Activated naive CD4-positive, alpha-beta T cell treated with anti-CD3 and anti-CD28 coated beads for 36 hours (primary cell): ENCODE measurements at regions of chr1 and their contacts with region 1.

Region 1: DNA sequence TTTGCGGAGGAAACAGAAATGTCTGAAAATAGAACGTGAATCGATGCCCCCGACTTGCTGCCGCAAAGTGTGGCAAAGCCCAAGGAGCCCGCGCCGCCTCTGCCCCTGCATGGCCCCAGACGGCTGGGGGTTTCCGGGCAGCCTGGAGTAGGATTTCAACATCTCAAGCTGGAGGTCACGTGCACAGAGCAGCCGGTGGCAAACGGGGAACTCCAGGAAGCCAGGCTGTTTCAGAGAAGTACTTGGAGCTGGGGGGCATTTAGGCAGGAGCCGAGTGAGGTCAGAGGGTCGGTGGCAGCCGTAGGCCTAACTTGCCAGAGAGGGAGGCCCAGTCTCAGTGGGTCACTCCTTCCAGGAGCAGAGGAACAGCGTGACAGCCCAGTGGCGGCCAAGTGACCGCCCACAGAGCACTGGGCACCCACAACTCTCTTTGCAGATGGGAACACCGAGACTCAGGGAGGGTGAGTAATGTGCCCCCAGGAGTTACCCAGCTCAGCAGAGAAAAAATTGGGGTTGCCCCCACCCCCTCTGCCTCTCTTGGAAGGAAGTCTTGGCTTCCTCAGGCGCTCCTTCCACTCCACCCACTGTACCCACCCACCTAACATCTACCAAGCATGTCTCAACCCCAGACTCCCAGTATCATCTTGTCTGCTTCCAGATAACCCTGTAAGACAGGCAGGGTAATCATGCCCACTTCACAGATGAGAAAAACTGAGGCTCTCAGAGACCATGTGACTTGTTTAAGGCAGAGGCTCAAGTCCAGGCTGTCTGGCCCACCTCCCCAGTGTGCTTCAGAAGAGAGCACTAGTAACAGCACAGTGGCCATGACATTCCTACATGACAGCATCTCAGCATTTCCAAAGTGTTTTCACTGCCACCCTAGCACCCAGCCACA is 179.4 kb downstream of the HIVEP3 start:
- DNase-seq: peak; percentile 96
- H3K4me3 Mint-ChIP-seq: peak overlapping the region; percentile 73
- H3K27ac Mint-ChIP-seq: peak overlapping the region; percentile 98
- H3K4me1 Mint-ChIP-seq: peaks cover 93% of the 10 kb centered on the region
- H3K27me3 Mint-ChIP-seq: no peaks in the 10 kb centered on the region

Region 2: DNA sequence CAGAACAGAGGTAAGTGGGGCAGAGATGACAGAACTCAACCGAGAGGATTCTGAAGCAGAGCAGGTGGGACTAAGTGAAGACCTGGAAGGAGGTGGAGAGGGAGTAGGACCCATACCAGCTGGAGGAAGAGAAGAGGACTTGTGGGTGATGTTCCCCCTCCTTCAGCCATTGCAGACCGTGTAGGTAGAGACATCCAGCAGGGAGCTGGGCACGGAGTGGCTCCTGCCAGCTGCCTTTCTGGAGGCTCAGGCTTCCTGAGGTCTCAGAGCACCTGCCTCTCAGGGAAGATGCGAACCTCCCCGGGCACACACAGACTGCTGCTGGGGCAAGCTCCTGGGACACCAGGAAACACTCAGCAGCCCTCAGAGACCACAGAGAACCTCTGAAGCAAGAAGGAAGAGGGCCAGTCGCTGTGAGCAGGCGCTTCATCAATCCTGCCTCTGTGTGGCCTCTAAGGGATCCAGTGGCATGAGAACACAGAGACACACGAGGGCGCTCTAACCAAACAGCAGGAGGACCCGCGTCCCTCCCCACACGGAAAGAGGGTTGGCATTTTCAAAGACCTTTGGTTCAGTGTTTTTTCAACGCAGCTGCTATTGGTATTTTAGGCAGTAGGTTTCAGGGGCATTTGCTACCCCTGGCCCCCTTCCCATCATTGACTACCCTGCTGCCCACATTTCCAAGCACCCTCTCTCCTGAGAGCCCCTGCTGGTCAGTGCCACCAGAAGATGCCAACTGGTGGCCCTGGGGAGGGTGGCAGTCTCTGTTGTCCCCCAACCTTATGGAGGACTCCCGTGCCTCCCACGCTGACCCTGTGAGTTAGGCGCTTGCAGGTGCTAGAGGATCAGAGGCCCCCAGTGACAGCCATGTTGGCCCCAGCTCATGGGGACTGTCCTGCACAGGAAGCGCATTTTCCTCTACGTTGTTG is 165.3 kb before region 1 on chr1:
- CTCF ChIA-PET with region 1: no interaction called
- intact Hi-C with region 1: no loop called
- DNase-seq: peak; percentile 92
- H3K4me3 Mint-ChIP-seq: no peak overlapping the region
- H3K27ac Mint-ChIP-seq: peak overlapping the region; percentile 20
- H3K4me1 Mint-ChIP-seq: peaks cover 42% of the 10 kb centered on the region
- H3K27me3 Mint-ChIP-seq: no peaks in the 10 kb centered on the region

Region 3: DNA sequence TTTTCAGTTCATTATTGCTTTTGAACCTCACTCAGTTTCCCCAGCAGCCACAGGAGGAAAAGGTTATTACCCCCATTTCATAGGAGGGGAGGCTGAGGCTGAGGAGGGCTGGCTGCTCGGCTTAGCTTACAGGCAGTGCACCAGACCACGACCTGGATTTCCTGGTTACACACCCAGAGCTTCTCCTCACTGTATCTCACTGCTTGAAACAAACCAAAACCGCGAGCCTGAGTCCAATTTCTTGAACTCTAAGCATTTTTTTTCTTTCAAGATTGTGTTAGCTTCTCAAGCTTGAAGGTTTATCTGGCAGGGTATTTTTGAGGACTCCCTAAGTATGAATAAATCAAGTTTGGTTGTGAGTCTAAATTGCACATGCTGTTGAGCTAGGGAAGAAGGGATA is 65.9 kb before region 1 on chr1:
- CTCF ChIA-PET with region 1: no interaction called
- intact Hi-C with region 1: loop called (anchors 2 kb)
- DNase-seq: peak; percentile 78
- H3K4me3 Mint-ChIP-seq: peak overlapping the region; percentile 46
- H3K27ac Mint-ChIP-seq: peak overlapping the region; percentile 88
- H3K4me1 Mint-ChIP-seq: peaks cover 74% of the 10 kb centered on the region
- H3K27me3 Mint-ChIP-seq: no peaks in the 10 kb centered on the region

Region 4: GRCh38 chr1:41720861-41721410 is 18.4 kb before region 1 on chr1:
- CTCF ChIA-PET with region 1: no interaction called
- intact Hi-C with region 1: no loop called
- DNase-seq: no peak
- H3K4me3 Mint-ChIP-seq: no peak overlapping the region
- H3K27ac Mint-ChIP-seq: no peak overlapping the region
- H3K4me1 Mint-ChIP-seq: peaks cover 32% of the 10 kb centered on the region
- H3K27me3 Mint-ChIP-seq: no peaks in the 10 kb centered on the region

Region 5: GRCh38 chr1:41806472-41807155 is 67.3 kb after region 1 on chr1:
- CTCF ChIA-PET with region 1: no interaction called
- intact Hi-C with region 1: loop called (anchors 1 kb)
- DNase-seq: peak; percentile 71
- H3K4me3 Mint-ChIP-seq: peak overlapping the region; percentile 31
- H3K27ac Mint-ChIP-seq: peak overlapping the region; percentile 86
- H3K4me1 Mint-ChIP-seq: peaks cover 89% of the 10 kb centered on the region
- H3K27me3 Mint-ChIP-seq: no peaks in the 10 kb centered on the region

Region 6: GRCh38 chr1:41862384-41863174 is 123.3 kb after region 1 on chr1:
- CTCF ChIA-PET with region 1: no interaction called
- intact Hi-C with region 1: loop called (anchors 2 kb)
- DNase-seq: peak; percentile 85
- H3K4me3 Mint-ChIP-seq: peak overlapping the region; percentile 41
- H3K27ac Mint-ChIP-seq: peak overlapping the region; percentile 88
- H3K4me1 Mint-ChIP-seq: peaks cover 44% of the 10 kb centered on the region
- H3K27me3 Mint-ChIP-seq: no peaks in the 10 kb centered on the region

Region 7: DNA sequence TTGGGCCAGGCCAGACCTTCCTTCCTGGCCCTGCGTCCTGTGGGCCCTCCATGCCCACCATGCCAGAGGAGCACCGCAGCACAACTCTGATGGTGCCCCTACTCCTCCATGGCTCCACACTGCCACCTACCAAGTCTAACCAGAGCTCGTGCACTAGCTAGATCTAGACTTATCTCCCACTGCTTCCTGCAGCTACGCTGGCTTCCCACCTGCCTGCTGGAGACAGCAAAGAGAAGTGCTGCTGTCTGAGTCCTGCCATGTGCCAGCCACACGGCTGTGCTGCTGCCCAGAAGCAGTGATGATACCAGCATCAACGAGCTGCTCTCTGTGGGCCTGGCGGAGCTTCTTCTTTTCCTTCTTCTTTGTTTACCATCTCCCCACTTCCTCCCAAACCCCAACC is 418.4 kb after region 1 on chr1:
- CTCF ChIA-PET with region 1: no interaction called
- intact Hi-C with region 1: no loop called
- DNase-seq: peak; percentile 38
- H3K4me3 Mint-ChIP-seq: no peak overlapping the region
- H3K27ac Mint-ChIP-seq: no peak overlapping the region
- H3K4me1 Mint-ChIP-seq: peaks cover 7% of the 10 kb centered on the region
- H3K27me3 Mint-ChIP-seq: no peaks in the 10 kb centered on the region